ENCODE measurements at regions of chr14 and their contacts with region 1.

Region 1: GRCh38 chr14:60622917-60623257 is 26.4 kb downstream of the SIX1 start:
- DNase-seq: no peak
- H3K4me3 ChIP-seq: no peak overlapping the region
- H3K27ac ChIP-seq: no peak overlapping the region
- H3K4me1 ChIP-seq: 0 out of 7 replicates have a peak, but pooled peaks cover 0 to 2% (median 0%) of the 10 kb centered on the region in 4 experiments
- H3K27me3 ChIP-seq: no peaks in the 10 kb centered on the region
- CTCF ChIP-seq: no peak
- EP300 ChIP-seq: no peak
- POLR2A ChIP-seq: no peak
- RAD21 ChIP-seq: no peak

Region 2: DNA sequence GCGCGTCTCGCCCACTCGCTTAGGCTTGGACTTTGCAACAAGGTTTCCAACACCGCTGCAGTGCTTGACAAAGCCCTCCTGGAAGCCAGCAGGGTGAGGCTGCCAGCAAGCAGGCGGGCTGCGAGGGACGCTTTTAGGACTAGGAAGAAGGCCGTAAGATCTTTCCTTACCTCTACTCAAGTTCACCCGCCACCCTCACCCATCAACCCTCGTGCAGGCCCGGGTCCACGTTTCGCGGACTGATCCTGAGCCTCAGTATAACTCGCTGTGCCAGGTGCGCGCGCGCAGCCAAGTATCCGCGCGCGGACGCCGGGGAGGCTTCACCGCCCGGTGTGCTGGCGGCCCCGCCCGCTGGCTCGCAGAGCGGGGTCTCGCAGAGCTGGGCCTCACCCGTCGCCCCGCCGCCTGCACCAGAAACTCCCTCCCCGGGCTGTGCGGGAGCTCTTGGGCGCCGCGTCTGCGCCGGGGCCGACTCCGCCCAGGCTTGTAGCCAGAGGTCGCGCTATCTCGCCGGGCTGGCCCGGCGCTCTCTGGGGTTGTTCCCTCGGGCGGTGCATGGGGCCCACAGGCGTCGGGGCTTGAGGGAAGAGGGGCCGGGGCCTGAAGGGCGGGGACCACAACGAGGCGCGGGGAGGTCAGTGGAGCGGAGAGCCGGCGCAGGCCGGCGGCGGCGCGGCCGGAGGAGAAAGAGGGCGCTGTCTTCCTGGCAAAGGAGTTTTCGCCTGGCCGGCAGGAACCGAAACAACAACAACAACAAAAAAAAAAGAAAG is 34.0 kb after region 1 on chr14:
- CTCF ChIA-PET with region 1: interaction called, 12 read pairs
- POLR2A ChIA-PET with region 1: no interaction called
- DNase-seq: peak in 1 of 2 experiments; percentile 87
- H3K4me3 ChIP-seq: peak overlapping the region; percentile 57 to 77 (median 64)
- H3K27ac ChIP-seq: no peak overlapping the region
- H3K4me1 ChIP-seq: peaks cover 11 to 28% (median 17%) of the 10 kb centered on the region in 4 experiments
- H3K27me3 ChIP-seq: peaks cover 56 to 80% (median 75%) of the 10 kb centered on the region in 4 experiments
- CTCF ChIP-seq: peak; percentile 30 to 51 (median 41)
- EP300 ChIP-seq: no peak
- POLR2A ChIP-seq: no peak
- RAD21 ChIP-seq: peak; percentile 71 to 72

Region 3: DNA sequence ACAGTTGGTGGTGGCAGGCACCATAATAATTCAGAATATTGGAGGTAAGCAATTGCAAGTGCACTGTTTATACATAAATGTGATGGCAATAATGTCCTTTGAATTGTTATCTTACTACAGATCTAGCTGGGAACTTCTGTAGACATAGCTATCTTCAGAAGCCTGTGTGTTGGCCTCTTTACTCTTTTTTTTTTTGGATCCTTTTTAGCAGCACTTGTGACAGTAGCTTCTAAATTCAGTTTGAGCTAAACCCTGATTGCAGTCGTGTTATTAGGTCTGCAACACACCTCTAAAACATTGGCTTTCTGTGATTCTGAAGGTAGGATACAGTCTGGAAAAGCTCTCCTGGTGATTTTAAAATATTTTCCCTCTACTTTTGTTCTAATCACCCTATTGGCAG is 396.6 kb after region 1 on chr14:
- CTCF ChIA-PET with region 1: interaction called, 10 read pairs
- POLR2A ChIA-PET with region 1: no interaction called
- DNase-seq: no peak
- H3K4me3 ChIP-seq: no peak overlapping the region
- H3K27ac ChIP-seq: no peak overlapping the region
- H3K4me1 ChIP-seq: no peaks in the 10 kb centered on the region
- H3K27me3 ChIP-seq: no peaks in the 10 kb centered on the region
- CTCF ChIP-seq: no peak
- EP300 ChIP-seq: no peak
- POLR2A ChIP-seq: no peak
- RAD21 ChIP-seq: no peak

Region 4: GRCh38 chr14:61252369-61253063 is 629.6 kb after region 1 on chr14:
- CTCF ChIA-PET with region 1: interaction called, 31 read pairs
- POLR2A ChIA-PET with region 1: no interaction called
- DNase-seq: peak; percentile 59 to 65
- H3K4me3 ChIP-seq: no peak overlapping the region
- H3K27ac ChIP-seq: no peak overlapping the region
- H3K4me1 ChIP-seq: peaks cover 0 to 3% (median 0%) of the 10 kb centered on the region in 4 experiments; a peak in 5 of 7 replicates
- H3K27me3 ChIP-seq: peaks cover 0 to 8% (median 6%) of the 10 kb centered on the region in 4 experiments; a peak in 3 of 7 replicates
- CTCF ChIP-seq: peak; percentile 69 to 91 (median 87)
- EP300 ChIP-seq: no peak
- POLR2A ChIP-seq: no peak
- RAD21 ChIP-seq: peak; percentile 99

Measured in H1 (cell line).